ENCODE measurements at regions of chr10 and their contacts with region 1.

Region 1: DNA sequence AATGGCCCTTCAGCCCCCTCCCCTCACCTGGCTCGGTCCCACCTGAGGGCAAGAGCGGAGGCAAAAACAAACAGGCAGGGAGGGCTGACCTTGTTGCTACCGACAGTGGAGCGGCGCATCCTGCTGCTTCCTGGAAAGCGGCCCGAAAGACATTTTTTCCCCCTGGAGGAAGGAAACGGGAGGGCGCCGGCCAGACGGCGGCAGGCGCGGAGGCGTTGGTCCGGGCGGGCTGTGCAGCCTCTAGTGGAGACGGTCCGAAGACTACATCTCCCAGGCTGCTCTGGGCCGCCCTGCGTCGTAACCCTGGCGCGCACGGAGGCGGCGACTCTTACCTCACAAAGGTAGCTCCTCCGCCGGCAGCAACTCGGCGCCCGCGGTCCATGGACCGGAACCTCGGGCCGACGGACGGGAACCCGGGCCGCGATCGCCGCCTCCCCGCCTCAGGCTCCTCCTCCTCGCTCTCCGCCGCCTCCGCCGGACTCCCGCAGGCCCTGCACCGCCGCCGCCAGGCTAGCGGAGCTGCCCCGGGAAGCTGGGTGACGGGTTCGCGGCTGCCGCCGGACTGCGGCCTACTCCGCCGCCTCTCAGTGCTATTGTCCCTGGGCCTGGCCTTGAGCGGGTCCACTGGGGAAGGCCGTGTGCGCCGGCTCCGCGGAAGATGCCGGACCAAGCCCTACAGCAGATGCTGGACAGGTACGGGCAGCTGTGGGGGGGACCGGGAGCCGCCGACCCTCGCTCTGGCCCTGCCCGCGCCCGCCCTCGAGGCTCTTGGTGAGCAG is at the starts of genes CPEB3 and MARCHF5:
- DNase-seq: peak; percentile 73
- ATAC-seq: peak; percentile 99
- H3K4me3 ChIP-seq: peak within 1 kb of the TSS; percentile 87 to 91
- H3K27ac ChIP-seq: peak within 1 kb of the TSS; percentile 84
- H3K4me1 ChIP-seq: peaks cover 6% of the 10 kb centered on the region; the same call in 1 of the 2 replicates
- H3K27me3 ChIP-seq: no peaks in the 10 kb centered on the region
- CTCF ChIP-seq: peak; percentile 65
- total RNA-seq, gene CPEB3: 2.4 TPM
- total RNA-seq, gene MARCHF5: 66.2 TPM

Region 2: DNA sequence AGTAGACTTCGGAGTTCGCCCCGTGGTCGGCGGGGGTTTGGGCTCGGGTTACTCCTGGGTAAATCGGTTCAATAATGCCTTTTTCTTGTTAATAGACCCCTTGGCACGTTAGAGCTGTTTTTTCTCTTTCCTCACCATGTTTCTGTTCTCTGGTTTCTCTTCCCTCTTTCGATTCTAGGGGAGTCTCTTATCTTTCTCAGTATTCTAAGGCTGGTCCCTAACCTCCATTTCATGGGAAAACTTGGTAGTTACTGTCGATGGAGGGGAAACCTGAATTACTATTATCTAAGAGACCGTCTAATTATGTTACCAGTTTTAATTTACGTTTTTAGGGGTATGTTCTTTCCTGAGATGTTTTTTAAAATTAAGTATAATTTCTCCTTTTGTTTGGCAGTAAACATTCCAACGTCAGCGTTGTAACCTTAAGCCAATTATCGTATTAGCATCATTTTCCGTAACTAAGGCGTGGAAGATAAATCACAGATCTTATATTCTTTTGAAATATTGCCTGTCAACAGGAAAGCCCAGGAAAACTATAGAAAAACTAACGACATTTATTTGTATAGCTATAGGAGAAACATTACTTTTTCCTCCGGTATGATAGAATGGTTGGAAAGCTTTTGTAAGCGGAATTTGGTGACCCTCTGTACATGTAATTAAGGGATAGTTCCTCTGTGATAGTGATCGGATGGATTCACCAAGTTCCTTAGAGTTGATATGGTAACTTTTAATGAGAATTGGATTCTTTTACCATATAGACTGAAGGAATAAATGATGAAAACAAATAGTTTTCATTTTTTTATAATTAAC is 366.6 kb before region 1 on chr10:
- CTCF ChIA-PET with region 1: no interaction called
- POLR2A ChIA-PET with region 1: interaction called, 10 read pairs
- in situ Hi-C with region 1: no loop called
- intact Hi-C with region 1: no loop called
- DNase-seq: no peak
- ATAC-seq: peak; percentile 10
- H3K4me3 ChIP-seq: peak overlapping the region; percentile 86 to 98
- H3K27ac ChIP-seq: peak overlapping the region; percentile 97
- H3K4me1 ChIP-seq: peaks cover 4% of the 10 kb centered on the region; the same call in 1 of the 2 replicates
- H3K27me3 ChIP-seq: no peaks in the 10 kb centered on the region
- CTCF ChIP-seq: no peak

Region 3: DNA sequence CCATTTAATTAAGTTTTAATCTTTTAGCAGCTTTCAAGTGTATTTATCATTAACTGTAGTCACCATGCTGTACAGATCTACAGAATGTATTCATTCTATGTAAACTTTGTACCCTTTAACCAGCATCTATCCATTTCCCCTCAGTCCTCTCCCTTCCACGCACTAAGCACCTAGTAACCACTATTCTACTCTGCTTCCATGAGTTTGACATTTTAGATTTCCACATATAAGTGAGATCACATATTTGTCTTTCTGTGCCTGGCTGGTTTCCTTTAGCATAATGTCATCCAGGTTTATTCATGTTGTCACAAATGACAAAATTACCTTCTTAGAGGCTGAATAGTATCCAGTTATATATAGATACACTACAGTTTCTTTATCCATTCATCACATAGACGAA is 287.8 kb before region 1 on chr10:
- CTCF ChIA-PET with region 1: no interaction called
- POLR2A ChIA-PET with region 1: no interaction called
- in situ Hi-C with region 1: no loop called
- intact Hi-C with region 1: no loop called
- DNase-seq: no peak
- ATAC-seq: no peak
- H3K4me3 ChIP-seq: no peak overlapping the region
- H3K27ac ChIP-seq: no peak overlapping the region
- H3K4me1 ChIP-seq: no peaks in the 10 kb centered on the region
- H3K27me3 ChIP-seq: no peaks in the 10 kb centered on the region
- CTCF ChIP-seq: no peak

Region 4: DNA sequence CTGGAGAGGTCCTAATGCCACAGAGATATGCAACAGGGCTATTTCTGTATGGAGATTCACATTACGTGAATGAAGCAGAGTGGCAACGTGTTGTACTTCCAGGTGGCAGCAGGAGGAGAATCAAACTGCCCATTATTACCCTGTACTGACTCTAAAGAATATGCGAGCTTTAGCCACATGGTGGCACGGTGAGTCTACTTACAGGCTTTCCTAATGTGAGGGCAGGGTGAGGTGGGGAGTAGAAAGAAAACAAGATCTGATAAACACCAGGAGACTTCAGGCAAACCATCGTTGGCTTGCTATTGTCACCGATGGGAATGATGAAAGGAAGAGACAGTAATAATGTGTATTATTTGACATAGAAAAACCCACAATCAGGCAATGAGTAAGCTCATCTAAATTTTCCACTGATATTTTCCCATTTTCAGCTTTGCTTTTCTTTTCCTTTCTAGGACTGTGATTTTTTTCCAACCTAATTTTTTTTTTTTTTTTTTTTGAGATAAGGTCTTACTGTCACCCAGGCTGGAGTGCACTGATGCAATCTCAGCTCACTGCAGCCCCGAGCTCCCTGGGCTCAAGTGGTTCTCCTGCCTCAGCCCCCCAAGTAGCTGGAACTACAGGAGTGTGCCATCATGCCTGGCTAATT is 203.2 kb before region 1 on chr10:
- CTCF ChIA-PET with region 1: interaction called, 25 read pairs
- POLR2A ChIA-PET with region 1: no interaction called
- in situ Hi-C with region 1: no loop called
- intact Hi-C with region 1: loop called (anchors 1 kb)
- DNase-seq: peak; percentile 84
- ATAC-seq: peak; percentile 100
- H3K4me3 ChIP-seq: no peak overlapping the region
- H3K27ac ChIP-seq: no peak overlapping the region; the same call in 1 of the 2 replicates
- H3K4me1 ChIP-seq: peaks cover 6% of the 10 kb centered on the region; the same call in 1 of the 2 replicates
- H3K27me3 ChIP-seq: no peaks in the 10 kb centered on the region
- CTCF ChIP-seq: peak; percentile 92

Region 5: DNA sequence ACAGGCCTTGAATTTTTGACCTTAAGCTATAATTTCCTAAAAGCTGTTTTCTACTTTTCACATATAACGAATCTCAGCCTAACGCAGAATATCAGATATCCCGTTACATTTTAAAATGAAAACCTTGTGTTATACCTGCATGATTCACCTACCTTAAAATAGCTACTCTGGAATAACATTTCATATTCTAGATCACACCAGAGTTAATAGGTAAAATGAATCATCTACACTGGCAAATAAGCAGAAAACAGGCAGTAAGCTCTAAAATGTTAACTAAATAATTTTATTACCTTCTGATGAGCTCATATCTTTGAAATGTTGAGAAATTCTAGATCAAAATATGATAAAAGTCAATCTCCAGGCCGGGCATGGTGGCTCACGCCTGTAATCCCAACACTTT is 71.5 kb before region 1 on chr10:
- CTCF ChIA-PET with region 1: no interaction called
- POLR2A ChIA-PET with region 1: no interaction called
- in situ Hi-C with region 1: no loop called
- intact Hi-C with region 1: no loop called
- DNase-seq: no peak
- ATAC-seq: no peak
- H3K4me3 ChIP-seq: no peak overlapping the region
- H3K27ac ChIP-seq: no peak overlapping the region
- H3K4me1 ChIP-seq: no peaks in the 10 kb centered on the region
- H3K27me3 ChIP-seq: no peaks in the 10 kb centered on the region
- CTCF ChIP-seq: no peak

Region 6: GRCh38 chr10:92240289-92241157 is 50.5 kb before region 1 on chr10:
- CTCF ChIA-PET with region 1: interaction called, 4 read pairs
- POLR2A ChIA-PET with region 1: interaction called, 5 read pairs
- in situ Hi-C with region 1: no loop called
- intact Hi-C with region 1: loop called (anchors 5 kb)
- DNase-seq: peak; percentile 47
- ATAC-seq: peak; percentile 85
- H3K4me3 ChIP-seq: peak overlapping the region; percentile 70 to 75
- H3K27ac ChIP-seq: peak overlapping the region; percentile 76
- H3K4me1 ChIP-seq: peaks cover 17% of the 10 kb centered on the region
- H3K27me3 ChIP-seq: no peaks in the 10 kb centered on the region
- CTCF ChIP-seq: no peak

Region 7: GRCh38 chr10:92434385-92434784 is 143.4 kb after region 1 on chr10:
- CTCF ChIA-PET with region 1: interaction called, 16 read pairs
- POLR2A ChIA-PET with region 1: interaction called, 9 read pairs
- in situ Hi-C with region 1: no loop called
- intact Hi-C with region 1: loop called (anchors 2 kb)
- DNase-seq: no peak
- ATAC-seq: no peak
- H3K4me3 ChIP-seq: no peak overlapping the region
- H3K27ac ChIP-seq: no peak overlapping the region
- H3K4me1 ChIP-seq: no peaks in the 10 kb centered on the region
- H3K27me3 ChIP-seq: no peaks in the 10 kb centered on the region
- CTCF ChIP-seq: no peak

Region 8: GRCh38 chr10:92839191-92840085 is 548.4 kb after region 1 on chr10:
- CTCF ChIA-PET with region 1: no interaction called
- POLR2A ChIA-PET with region 1: interaction called, 10 read pairs
- in situ Hi-C with region 1: no loop called
- intact Hi-C with region 1: no loop called
- DNase-seq: no peak
- ATAC-seq: no peak
- H3K4me3 ChIP-seq: no peak overlapping the region
- H3K27ac ChIP-seq: no peak overlapping the region
- H3K4me1 ChIP-seq: peaks cover 7% of the 10 kb centered on the region; the same call in 1 of the 2 replicates
- H3K27me3 ChIP-seq: no peaks in the 10 kb centered on the region
- CTCF ChIP-seq: peak; percentile 64